Ovary (tissue), 10 donors: ENCODE measurements at regions of chr17 and their contacts with region 1.

Region 1: DNA sequence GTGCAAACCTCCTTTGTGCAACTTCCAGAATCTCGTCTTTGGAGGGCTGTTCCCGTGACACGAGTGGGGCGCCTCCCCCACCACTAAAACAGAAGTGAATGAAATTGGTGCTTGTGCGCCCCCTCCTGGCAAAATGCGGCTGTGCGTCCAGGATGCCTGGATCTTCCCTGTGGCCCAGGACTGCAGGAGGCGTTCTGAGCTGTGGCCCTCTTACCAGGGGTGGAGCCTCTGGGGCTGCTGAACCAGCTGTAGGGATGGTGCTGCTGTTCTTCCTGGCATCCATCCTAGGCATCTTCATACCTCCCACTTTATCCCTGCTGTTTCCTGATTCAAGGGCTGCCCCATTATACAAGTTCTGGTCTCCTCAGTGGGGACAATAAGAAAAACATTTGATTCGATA is 18.5 kb upstream of the NAGLU start:
- DNase-seq: peak; percentile 85 to 94 (median 92)
- H3K4me3 ChIP-seq: no peak overlapping the region
- H3K27ac ChIP-seq: peak overlapping the region; percentile 49 to 92
- H3K4me1 ChIP-seq: peaks cover 67% of the 10 kb centered on the region
- H3K27me3 ChIP-seq: no peaks in the 10 kb centered on the region
- CTCF ChIP-seq: peak; percentile 75 to 94 (median 92)
- EP300 ChIP-seq: no peak
- POLR2A ChIP-seq: no peak

Region 2: DNA sequence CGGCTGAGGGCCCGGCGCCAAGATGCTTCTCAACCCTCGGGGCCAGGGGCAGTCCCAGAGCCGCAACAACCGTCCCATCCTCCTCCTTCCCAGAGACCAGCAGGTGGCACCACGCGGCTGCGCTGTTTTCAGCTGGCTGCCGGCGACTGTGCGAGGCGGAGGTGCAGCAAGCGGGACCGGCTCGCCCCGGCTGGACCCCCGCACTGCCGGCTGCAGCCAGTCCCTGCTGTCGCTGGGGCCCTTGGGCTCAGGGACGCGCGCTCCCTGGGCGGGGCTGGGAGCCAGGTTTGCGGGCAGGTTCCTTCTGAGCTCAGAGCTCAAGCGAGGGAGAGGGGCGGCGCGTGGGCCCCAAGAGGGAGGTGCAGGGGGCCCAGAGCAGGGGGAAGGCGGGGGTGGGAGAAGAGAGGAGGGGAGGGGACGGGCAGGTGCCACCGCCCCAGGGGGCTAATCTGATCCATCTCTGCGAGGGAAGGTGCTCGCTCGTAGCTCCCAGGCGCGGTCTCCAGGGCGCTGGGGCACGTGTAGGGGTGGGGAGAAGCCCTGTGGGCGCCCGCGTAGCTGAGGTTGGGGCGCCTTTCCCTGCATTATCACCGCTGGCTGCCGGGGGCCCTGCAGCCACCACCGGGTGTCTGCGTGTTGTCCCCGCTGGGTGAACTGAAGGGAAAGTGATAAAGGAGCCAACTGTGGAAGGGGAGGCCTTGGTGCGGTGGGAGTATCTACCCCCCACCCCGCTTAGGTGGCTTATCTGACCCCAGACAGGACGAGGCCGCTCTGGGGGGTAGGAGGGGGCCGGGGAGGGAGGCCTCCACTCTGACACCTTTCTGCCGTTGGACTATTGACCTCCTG is 205.0 kb before region 1 on chr17:
- intact Hi-C with region 1: loop called in 1 of 4 experiments (anchors 5 kb)
- DNase-seq: peak; percentile 89 to 92 (median 90)
- H3K4me3 ChIP-seq: peak overlapping the region; percentile 22
- H3K27ac ChIP-seq: peak overlapping the region; percentile 43 to 92
- H3K4me1 ChIP-seq: peaks cover 20% of the 10 kb centered on the region
- H3K27me3 ChIP-seq: no peaks in the 10 kb centered on the region
- CTCF ChIP-seq: peak; percentile 64 to 81 (median 79)
- EP300 ChIP-seq: no peak
- POLR2A ChIP-seq: peak; percentile 16

Region 3: GRCh38 chr17:42322382-42323267 is 194.9 kb before region 1 on chr17:
- intact Hi-C with region 1: loop called in 1 of 4 experiments (anchors 5 kb)
- DNase-seq: peak; percentile 90 to 96 (median 94)
- H3K4me3 ChIP-seq: no peak overlapping the region
- H3K27ac ChIP-seq: no peak overlapping the region
- H3K4me1 ChIP-seq: peaks cover 3% of the 10 kb centered on the region
- H3K27me3 ChIP-seq: no peaks in the 10 kb centered on the region
- CTCF ChIP-seq: peak; percentile 96 to 100 (median 99)
- EP300 ChIP-seq: no peak
- POLR2A ChIP-seq: peak; percentile 42

Region 4: DNA sequence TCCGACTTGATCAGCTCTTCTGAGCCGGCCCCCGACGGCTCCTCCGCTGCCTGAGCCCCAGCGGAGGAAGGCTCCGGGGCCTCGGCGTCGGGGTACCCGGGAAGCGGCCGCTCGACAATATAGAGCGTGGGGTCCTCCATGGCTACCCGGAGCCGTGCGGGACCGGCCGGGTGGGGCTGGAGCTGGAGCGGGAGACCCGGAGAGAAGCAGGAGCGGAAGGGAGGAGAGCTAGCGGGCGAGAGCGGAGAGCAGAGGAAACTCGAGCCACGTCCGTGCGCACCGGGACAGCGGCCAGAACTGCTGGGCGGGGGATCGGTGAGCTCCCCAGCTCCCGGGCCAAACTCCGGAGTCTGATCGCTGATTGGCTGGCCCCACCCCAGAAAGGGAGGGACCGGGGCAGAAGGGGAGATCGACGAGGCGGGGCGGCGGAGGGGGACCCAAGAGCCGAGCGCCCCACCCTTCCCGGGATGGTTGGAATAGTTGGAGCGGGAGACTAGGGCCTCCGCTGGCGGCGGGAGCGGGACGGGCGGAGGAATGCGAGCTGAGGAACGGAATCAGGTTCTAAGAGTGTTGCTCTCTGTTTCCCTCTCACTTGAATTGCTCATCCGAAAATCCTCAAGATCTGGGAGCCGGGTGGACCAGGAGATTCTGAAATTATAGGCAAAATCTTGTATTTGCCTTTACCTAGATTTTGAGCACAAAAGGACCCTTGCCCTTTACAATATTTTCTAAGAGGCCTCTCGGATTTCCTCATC is 94.4 kb before region 1 on chr17 and contains the start of gene CAVIN1:
- intact Hi-C with region 1: loop called in 3 of 4 experiments (anchors 5 to 10 kb)
- DNase-seq: peak; percentile 100
- H3K4me3 ChIP-seq: peak within 1 kb of the TSS; percentile 96
- H3K27ac ChIP-seq: peak within 1 kb of the TSS; percentile 54 to 78
- H3K4me1 ChIP-seq: peaks cover 5% of the 10 kb centered on the region
- H3K27me3 ChIP-seq: no peaks in the 10 kb centered on the region
- CTCF ChIP-seq: no peak
- EP300 ChIP-seq: no peak
- POLR2A ChIP-seq: peak; percentile 95
- total RNA-seq, gene CAVIN1: 122 to 407 (median 281) TPM

Region 5: GRCh38 chr17:42428141-42428944 is 89.2 kb before region 1 on chr17:
- intact Hi-C with region 1: loop called in 3 of 4 experiments (anchors 5 to 10 kb)
- DNase-seq: peak in 1 of 5 donors; percentile 52
- H3K4me3 ChIP-seq: no peak overlapping the region
- H3K27ac ChIP-seq: no peak overlapping the region
- H3K4me1 ChIP-seq: peaks cover 6% of the 10 kb centered on the region
- H3K27me3 ChIP-seq: no peaks in the 10 kb centered on the region
- CTCF ChIP-seq: peak; percentile 24 to 53 (median 50)
- EP300 ChIP-seq: no peak
- POLR2A ChIP-seq: no peak

Region 6: GRCh38 chr17:42459256-42459800 is 58.2 kb before region 1 on chr17:
- intact Hi-C with region 1: loop called in 2 of 4 experiments (anchors 5 kb)
- DNase-seq: peak; percentile 55 to 77 (median 63)
- H3K4me3 ChIP-seq: peak overlapping the region; percentile 86
- H3K27ac ChIP-seq: peak overlapping the region; percentile 89 to 92
- H3K4me1 ChIP-seq: peaks cover 7% of the 10 kb centered on the region
- H3K27me3 ChIP-seq: no peaks in the 10 kb centered on the region
- CTCF ChIP-seq: peak in 1 of 3 donors; percentile 12
- EP300 ChIP-seq: no peak
- POLR2A ChIP-seq: no peak

Region 7: DNA sequence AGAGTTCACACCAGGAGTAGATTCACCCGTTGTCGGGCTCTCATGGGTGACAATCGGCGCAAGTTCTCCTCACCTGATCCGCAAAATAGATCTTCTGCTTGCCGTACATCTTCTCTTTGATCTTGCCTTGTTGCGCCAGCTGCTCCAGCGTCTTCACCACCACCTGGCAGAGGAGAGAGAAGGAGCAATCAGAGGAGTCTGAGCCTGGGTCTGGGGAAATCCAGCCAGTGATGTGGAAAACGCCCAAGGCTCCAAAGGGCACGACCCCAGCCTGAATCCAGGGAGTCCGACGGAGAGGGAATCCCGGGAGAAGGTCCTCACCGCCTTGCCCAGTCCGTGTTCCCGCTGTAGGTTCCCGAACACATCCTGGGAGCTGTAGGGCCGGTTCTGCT is 59.6 kb after region 1 on chr17:
- intact Hi-C with region 1: no loop called
- DNase-seq: no peak
- H3K4me3 ChIP-seq: peak overlapping the region; percentile 65
- H3K27ac ChIP-seq: no peak overlapping the region
- H3K4me1 ChIP-seq: peaks cover 4% of the 10 kb centered on the region
- H3K27me3 ChIP-seq: no peaks in the 10 kb centered on the region
- CTCF ChIP-seq: no peak
- EP300 ChIP-seq: no peak
- POLR2A ChIP-seq: no peak

Region 8: GRCh38 chr17:42798383-42799380 is 281.2 kb after region 1 on chr17 and contains the starts of genes CNTD1 and COA3:
- intact Hi-C with region 1: no loop called
- DNase-seq: peak; percentile 82 to 89 (median 86)
- H3K4me3 ChIP-seq: peak within 1 kb of the TSS; percentile 85
- H3K27ac ChIP-seq: peak within 1 kb of the TSS; percentile 32 to 62
- H3K4me1 ChIP-seq: peaks cover 10% of the 10 kb centered on the region
- H3K27me3 ChIP-seq: no peaks in the 10 kb centered on the region
- CTCF ChIP-seq: peak in 1 of 3 donors; percentile 18
- EP300 ChIP-seq: no peak
- POLR2A ChIP-seq: no peak
- total RNA-seq, gene CNTD1: 0.30 to 0.79 (median 0.33) TPM in 5 of 7 donors, not detected in the others
- total RNA-seq, gene COA3: 49.1 to 78.2 (median 62.9) TPM